HEK293 (cell line): ENCODE measurements at regions of chr1 and their contacts with region 1.

Region 1: DNA sequence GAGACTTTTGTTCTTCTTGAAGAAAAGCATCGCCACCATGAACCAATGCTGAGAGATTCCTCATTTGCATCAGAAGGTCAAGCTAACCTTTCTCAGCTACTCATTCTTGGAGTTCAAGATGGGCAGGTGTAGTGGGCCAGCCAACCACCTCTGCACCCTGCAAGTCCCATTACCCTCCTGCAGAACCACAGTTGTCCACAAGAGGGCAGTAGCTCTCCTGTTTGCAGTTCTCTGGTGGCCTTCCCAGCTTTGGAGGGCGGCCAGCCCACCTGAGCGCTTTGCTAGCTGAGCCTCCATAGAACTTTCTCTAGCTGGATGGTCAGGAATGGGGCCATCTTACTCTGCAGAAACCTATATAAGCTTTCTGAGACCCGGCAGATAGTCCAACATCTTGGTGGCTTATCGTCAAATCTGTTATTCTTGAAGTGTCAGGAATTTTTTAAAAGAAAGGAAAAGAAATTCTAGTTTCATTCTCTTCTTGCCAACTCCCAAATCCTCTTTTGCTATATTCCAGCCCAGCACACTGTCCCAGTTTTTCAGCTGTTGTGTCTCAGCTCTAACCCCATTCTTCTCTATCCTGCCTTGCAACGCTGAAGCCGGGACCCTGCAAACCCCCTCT is 11.0 kb upstream of the LMX1A start:
- H3K4me3 ChIP-seq: no peak overlapping the region
- H3K27ac ChIP-seq: no peak overlapping the region
- H3K4me1 ChIP-seq: no peaks in the 10 kb centered on the region
- CTCF ChIP-seq: peak; percentile 47; the same call in 1 of the 2 replicates

Region 2: DNA sequence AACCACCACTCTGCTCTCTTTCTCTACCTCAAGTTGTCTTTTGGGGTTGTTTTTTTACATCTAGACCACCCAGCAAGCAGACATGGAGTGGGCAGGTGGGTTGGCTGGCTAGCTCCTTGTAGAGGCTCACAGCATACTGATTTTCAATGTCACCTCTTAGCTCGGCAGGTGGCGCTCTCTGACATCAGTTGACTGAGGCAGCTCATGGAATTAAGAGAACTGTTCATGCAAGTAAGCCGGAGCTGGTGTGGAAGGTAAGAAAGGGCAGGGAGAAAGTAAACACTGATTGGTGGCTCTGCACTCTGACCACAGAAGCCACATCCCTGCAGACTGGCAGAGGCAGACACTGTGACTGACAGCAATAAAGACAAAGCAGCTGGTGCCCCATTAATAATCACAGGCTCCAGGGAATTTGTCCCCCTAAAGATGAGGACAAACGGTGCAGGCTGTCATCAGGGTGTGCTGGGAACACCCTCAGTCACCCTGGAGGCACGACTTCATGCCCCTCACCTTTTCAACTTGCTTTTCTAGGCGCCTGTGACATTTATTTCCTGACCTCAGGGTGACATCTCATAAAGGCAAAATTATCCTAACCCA is 237.8 kb before region 1 on chr1:
- CTCF ChIA-PET with region 1: interaction called, 49 read pairs
- POLR2A ChIA-PET with region 1: no interaction called
- H3K4me3 ChIP-seq: no peak overlapping the region
- H3K27ac ChIP-seq: no peak overlapping the region
- H3K4me1 ChIP-seq: no peaks in the 10 kb centered on the region
- CTCF ChIP-seq: peak; percentile 72

Region 3: GRCh38 chr1:165257969-165258459 is 109.5 kb before region 1 on chr1:
- CTCF ChIA-PET with region 1: interaction called, 125 read pairs
- POLR2A ChIA-PET with region 1: interaction called, 3 read pairs
- H3K4me3 ChIP-seq: no peak overlapping the region
- H3K27ac ChIP-seq: no peak overlapping the region
- H3K4me1 ChIP-seq: peaks cover 3% of the 10 kb centered on the region; the same call in 1 of the 2 replicates
- CTCF ChIP-seq: peak; percentile 64; the same call in 1 of the 2 replicates

Region 4: GRCh38 chr1:165355139-165355976 is 12.1 kb before region 1 on chr1:
- CTCF ChIA-PET with region 1: interaction called, 32 read pairs
- POLR2A ChIA-PET with region 1: no interaction called
- H3K4me3 ChIP-seq: no peak overlapping the region
- H3K27ac ChIP-seq: no peak overlapping the region
- H3K4me1 ChIP-seq: no peaks in the 10 kb centered on the region
- CTCF ChIP-seq: no peak

Region 5: DNA sequence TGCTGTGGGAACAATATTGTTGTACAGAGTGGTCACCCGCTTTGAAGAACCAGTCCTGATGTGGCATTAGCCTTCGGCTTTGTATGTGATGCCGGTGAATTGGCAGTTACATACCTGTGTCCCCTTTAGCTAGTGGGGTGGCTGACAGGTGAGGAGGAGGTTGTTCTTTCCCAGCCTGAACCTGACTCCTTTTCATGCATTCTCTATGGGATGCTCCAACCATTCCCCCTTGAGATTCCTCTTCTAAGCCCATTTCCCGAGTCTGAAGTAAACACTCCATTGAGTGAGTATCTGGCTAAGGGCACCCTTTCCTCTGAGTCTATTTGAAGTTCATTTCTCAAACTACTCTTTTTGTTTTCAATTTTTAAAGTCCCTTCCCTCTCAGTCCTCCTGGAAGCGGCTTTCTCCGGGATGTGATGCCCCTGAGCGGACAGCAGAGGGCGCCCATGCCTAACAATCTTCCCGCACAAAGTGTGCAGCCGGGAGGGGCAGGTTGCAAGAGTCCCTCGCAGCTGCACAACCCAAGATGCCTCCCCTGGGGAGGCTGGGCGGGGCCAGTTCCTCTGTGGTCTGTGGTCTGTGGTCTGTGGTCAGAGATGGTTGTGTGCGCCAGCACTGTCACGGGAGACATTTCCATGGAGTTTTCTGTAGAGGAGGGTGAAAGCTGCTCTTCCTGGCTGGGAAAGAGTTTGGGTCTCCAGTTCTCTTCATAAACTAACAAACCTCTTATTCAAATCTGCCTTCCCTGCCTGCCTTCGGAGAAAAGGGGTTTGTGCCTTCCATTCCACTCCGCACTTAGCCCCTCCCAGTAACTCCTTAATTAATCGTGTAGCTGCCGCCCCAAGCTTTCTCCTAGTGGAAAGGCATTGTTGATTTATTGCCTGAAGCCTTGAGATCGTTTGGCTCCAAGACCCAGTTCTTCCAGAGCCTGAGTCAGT is 25.4 kb after region 1 on chr1:
- CTCF ChIA-PET with region 1: interaction called, 38 read pairs
- POLR2A ChIA-PET with region 1: no interaction called
- H3K4me3 ChIP-seq: peak overlapping the region; percentile 28
- H3K27ac ChIP-seq: no peak overlapping the region
- H3K4me1 ChIP-seq: no peaks in the 10 kb centered on the region
- CTCF ChIP-seq: peak; percentile 91

Region 6: DNA sequence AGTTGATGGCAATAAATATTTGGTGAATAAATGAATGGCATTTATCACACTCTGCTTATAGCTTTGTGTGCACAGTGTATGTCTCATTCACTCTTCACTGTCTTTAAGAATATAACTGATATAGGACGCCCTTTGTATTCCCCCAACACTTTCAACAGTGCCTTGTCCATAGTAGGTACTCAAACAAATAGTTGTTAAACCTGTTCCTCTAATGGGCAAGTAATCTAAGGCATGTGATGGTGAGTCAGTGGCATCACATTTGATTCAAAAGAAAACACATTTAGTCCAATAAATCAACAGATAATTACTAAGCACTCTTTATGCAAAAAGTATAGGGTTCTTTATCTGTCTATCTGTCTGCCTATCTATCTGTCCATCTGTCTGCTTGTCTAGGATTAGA is 88.6 kb after region 1 on chr1:
- CTCF ChIA-PET with region 1: no interaction called
- POLR2A ChIA-PET with region 1: no interaction called
- H3K4me3 ChIP-seq: no peak overlapping the region
- H3K27ac ChIP-seq: no peak overlapping the region
- H3K4me1 ChIP-seq: no peaks in the 10 kb centered on the region
- CTCF ChIP-seq: no peak

Region 7: DNA sequence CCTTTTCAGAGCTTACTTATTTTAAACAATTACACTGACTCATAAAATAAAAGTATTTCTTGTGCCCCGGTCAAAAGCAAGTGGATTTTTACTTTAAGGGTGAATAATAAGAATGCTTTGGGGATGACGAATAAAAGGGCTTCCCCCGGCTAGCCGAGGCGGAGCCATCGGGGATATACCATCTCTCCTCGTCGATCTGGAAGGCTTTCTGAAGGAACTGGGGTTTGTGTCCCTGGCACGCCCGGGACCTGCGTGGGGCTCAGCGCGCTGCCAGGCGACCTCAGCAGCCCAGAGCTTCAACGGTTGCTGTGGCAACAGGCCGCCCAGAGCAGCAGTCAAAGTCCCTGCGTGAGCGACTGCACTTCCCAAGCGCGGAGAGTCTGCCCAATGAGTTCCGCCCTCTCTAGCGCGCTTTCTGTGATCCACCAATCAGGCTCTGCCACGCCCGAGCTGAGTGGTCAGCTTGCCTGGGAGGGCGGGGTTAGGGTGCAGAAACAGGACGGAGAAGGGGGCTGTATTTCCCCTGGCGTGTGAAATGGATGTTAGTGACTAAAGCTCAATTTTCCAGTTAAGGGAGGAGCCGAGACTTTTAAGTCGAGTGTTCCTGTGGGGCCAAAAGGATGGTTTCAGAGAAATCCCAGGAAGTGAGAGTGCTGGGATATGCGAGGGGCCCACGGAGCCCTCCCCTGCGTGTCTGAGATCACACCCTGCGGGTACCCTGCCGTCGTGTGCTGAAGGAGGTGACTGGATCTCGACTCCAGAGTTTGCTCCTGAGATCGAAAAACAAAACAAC is 230.6 kb after region 1 on chr1:
- CTCF ChIA-PET with region 1: interaction called, 21 read pairs
- POLR2A ChIA-PET with region 1: no interaction called
- H3K4me3 ChIP-seq: peak overlapping the region; percentile 60
- H3K27ac ChIP-seq: no peak overlapping the region; the same call in 1 of the 2 replicates
- H3K4me1 ChIP-seq: no peaks in the 10 kb centered on the region
- CTCF ChIP-seq: no peak